Heart left ventricle (tissue), 16 donors: ENCODE measurements at regions of chr15 and their contacts with region 1.

Region 1: GRCh38 chr15:101258238-101259144 is 6.6 kb upstream of the CHSY1 start:
- DNase-seq: peak in 3 of 5 donors; percentile 57 to 69 (median 68)
- ATAC-seq: peak in 3 of 4 donors; percentile 51 to 66 (median 61)
- H3K4me3 ChIP-seq: no peak overlapping the region
- H3K27ac ChIP-seq: no peak overlapping the region
- H3K4me1 ChIP-seq: peaks cover 0 to 23% (median 10%) of the 10 kb centered on the region in 12 donors
- H3K27me3 ChIP-seq: no peaks in the 10 kb centered on the region
- CTCF ChIP-seq: peak; percentile 67 to 94 (median 88)
- POLR2A ChIP-seq: no peak

Region 2: DNA sequence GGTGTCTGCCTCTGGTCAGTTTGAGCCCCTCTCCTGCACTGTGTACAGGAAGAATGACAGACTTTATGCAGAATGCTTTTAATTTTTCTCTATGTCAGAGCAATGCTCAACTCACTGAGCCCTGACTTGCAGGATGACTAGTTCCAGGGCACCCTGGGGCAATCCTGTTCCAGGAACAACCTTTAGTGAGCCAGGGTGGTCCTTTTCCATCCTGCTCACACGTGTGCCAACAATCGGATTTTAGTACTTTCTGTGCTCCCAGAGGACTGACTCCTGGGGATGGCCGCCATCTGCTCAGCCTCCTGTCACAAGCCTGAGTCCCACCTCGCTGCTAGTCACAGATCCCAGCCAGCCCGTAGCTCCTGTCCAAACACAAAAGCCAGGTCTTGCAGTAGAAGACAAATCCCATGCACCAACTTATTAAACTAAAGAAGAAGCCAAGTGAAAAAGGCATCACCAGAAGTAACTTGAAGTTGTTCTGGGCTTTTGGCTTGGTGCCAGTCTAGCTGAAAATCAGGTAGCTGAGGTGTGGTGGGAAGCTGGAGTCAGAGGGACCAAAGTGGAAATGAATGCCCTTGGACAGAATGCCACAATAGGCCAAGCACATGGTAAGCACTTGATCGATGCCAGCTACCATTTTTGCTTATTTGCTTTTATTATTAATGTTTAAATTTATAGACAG is 426.9 kb before region 1 on chr15:
- intact Hi-C with region 1: no loop called
- DNase-seq: no peak
- ATAC-seq: no peak
- H3K4me3 ChIP-seq: no peak overlapping the region
- H3K27ac ChIP-seq: no peak overlapping the region
- H3K4me1 ChIP-seq: no peaks in the 10 kb centered on the region
- H3K27me3 ChIP-seq: peaks cover 0 to 3% (median 0%) of the 10 kb centered on the region in 9 donors
- CTCF ChIP-seq: no peak
- POLR2A ChIP-seq: no peak

Region 3: GRCh38 chr15:101088788-101089583 is 169.5 kb before region 1 on chr15:
- intact Hi-C with region 1: loop called (anchors 1 to 2 kb)
- DNase-seq: peak; percentile 67 to 90 (median 77)
- ATAC-seq: peak in 3 of 4 donors; percentile 62 to 82 (median 78)
- H3K4me3 ChIP-seq: peak overlapping the region in 5 of 12 donors; percentile 0 to 33 (median 20)
- H3K27ac ChIP-seq: peak overlapping the region in 3 of 12 donors; percentile 52 to 83 (median 55)
- H3K4me1 ChIP-seq: peaks cover 0 to 39% (median 31%) of the 10 kb centered on the region in 12 donors
- H3K27me3 ChIP-seq: no peaks in the 10 kb centered on the region
- CTCF ChIP-seq: peak; percentile 98 to 100 (median 99)
- POLR2A ChIP-seq: no peak

Region 4: GRCh38 chr15:101114166-101115009 is 144.1 kb before region 1 on chr15:
- intact Hi-C with region 1: no loop called
- DNase-seq: no peak
- ATAC-seq: no peak
- H3K4me3 ChIP-seq: no peak overlapping the region
- H3K27ac ChIP-seq: no peak overlapping the region
- H3K4me1 ChIP-seq: peaks cover 0 to 16% (median 4%) of the 10 kb centered on the region in 12 donors
- H3K27me3 ChIP-seq: no peaks in the 10 kb centered on the region
- CTCF ChIP-seq: no peak
- POLR2A ChIP-seq: no peak

Region 5: DNA sequence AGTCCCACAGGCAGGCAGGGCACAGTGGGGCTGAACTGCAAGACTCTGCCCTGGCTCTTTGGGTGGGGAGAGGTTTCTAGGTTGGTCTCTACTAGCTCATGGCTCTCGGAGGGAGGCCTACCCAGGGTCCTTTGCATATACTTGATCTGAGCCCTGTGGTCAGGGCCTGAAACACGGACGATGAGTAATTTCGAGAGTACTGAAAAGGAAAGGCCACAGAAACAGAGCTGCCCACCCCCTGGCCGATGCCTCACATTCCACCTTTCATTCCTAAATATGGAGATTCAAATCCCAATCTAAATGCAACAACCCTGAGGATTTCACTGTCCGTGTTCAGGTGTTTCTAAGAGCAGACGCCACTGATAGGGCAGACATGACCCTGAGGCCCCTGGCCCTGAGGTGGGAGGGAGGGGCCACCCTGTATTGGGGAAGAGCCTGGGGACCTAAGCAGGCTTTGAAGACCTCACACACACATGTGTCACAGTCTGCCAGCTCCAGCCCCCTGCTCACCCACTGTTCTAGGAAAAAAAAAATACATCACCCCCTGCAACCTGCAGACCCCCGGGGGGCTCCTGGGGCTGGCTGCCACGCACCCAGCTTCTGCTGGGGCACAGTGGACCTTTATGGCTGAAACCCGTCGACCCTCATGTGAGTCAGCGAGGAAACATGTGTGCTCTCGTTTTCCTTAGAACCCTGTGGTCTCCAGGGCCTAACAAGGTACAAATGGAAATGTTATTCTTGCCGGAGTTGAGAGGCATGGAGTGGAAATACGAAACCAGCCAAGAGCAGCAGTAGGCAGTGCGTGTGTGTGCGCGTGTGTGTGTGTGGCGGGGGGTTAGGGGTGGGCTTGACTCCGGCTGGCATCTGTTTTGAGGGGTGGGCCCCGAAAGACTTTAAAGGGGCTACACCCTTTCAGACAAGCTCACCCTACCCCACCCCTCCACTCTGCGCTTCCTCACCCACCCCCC is 119.3 kb before region 1 on chr15:
- intact Hi-C with region 1: no loop called
- DNase-seq: no peak
- ATAC-seq: no peak
- H3K4me3 ChIP-seq: no peak overlapping the region
- H3K27ac ChIP-seq: no peak overlapping the region
- H3K4me1 ChIP-seq: peaks cover 0 to 39% (median 5%) of the 10 kb centered on the region in 12 donors
- H3K27me3 ChIP-seq: no peaks in the 10 kb centered on the region
- CTCF ChIP-seq: no peak
- POLR2A ChIP-seq: no peak